Activated CD4-positive, alpha-beta memory T cell treated with anti-CD3 and anti-CD28 coated beads for 36 hours (primary cell): ENCODE measurements at regions of chr21 and their contacts with region 1.

Region 1: GRCh38 chr21:38349111-38349746 is 92.4 kb downstream of the KCNJ15 start:
- DNase-seq: peak; percentile 44
- H3K4me3 Mint-ChIP-seq: peak overlapping the region; percentile 13
- H3K27ac Mint-ChIP-seq: peak overlapping the region; percentile 77
- H3K4me1 Mint-ChIP-seq: peaks cover 42% of the 10 kb centered on the region
- H3K27me3 Mint-ChIP-seq: peaks cover 2% of the 10 kb centered on the region

Region 2: GRCh38 chr21:38244885-38245545 is 104.2 kb before region 1 on chr21:
- CTCF ChIA-PET with region 1: interaction called, 19 read pairs
- POLR2A ChIA-PET with region 1: no interaction called
- intact Hi-C with region 1: loop called (anchors 1 kb)
- DNase-seq: peak; percentile 79
- H3K4me3 Mint-ChIP-seq: no peak overlapping the region
- H3K27ac Mint-ChIP-seq: peak overlapping the region; percentile 64
- H3K4me1 Mint-ChIP-seq: peaks cover 26% of the 10 kb centered on the region
- H3K27me3 Mint-ChIP-seq: peaks cover 14% of the 10 kb centered on the region

Region 3: DNA sequence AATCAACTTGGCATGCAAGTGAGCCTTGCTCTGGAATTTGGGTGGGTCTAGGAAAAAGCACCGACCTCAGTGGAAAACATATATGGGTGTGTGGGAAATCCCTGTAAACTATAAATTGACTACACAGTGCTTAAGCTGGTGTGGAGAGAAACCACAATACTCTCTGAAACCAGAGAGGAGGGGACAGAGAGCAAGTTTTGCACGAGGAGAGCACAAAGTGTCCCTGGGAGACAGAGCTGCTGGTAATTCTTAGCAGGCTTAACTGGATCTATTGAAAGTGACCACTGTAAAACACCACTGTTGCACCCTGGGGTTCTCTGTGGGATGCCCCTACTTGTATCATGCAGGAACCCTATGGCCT is 79.7 kb before region 1 on chr21:
- CTCF ChIA-PET with region 1: interaction called, 12 read pairs
- POLR2A ChIA-PET with region 1: no interaction called
- intact Hi-C with region 1: loop called (anchors 1 kb)
- DNase-seq: no peak
- H3K4me3 Mint-ChIP-seq: no peak overlapping the region
- H3K27ac Mint-ChIP-seq: no peak overlapping the region
- H3K4me1 Mint-ChIP-seq: peaks cover 27% of the 10 kb centered on the region
- H3K27me3 Mint-ChIP-seq: peaks cover 13% of the 10 kb centered on the region

Region 4: GRCh38 chr21:38303300-38303699 is 45.9 kb before region 1 on chr21:
- CTCF ChIA-PET with region 1: interaction called, 3 read pairs
- POLR2A ChIA-PET with region 1: no interaction called
- intact Hi-C with region 1: loop called (anchors 5 kb)
- DNase-seq: no peak
- H3K4me3 Mint-ChIP-seq: no peak overlapping the region
- H3K27ac Mint-ChIP-seq: no peak overlapping the region
- H3K4me1 Mint-ChIP-seq: peaks cover 25% of the 10 kb centered on the region
- H3K27me3 Mint-ChIP-seq: peaks cover 2% of the 10 kb centered on the region

Region 5: DNA sequence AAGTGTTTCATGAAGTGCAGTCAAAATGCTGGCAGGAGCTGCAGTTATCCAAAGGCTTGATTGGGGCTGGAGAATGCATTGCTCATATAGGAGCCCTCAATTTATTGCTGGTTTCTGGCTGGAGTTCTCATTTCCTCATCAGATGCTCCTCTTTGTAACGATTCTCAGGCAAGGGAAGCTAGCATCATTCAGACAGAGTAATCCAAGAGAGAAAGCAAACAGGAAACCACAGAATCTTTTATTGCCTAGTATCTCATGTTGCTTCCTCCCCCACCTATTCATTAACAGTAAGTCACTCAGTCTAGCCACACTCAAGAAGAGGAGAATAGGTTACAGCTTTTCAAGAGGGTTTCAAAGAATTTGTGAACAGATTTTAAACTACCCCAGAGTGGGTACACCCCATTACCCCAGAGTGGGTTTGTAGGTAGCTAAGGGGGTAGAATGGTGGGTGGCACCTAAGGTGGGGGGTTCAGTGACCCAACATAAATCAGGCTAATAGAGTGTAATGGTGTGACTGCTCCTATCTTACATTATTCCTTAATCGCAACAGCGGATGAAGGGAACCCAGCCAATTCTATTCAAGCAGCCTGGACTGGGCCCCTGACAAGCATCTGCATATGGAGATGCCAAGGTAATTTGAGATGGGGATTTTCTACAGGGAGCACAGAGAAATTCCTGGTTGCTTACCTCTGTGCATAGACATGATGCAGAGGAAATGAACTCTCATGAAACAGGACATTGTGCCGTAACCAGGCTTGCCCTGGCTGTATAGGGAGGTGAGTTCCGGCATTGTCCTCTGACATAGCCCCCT is 25.3 kb before region 1 on chr21:
- CTCF ChIA-PET with region 1: interaction called, 4 read pairs
- POLR2A ChIA-PET with region 1: interaction called, 3 read pairs
- intact Hi-C with region 1: loop called (anchors 1 kb)
- DNase-seq: no peak
- H3K4me3 Mint-ChIP-seq: no peak overlapping the region
- H3K27ac Mint-ChIP-seq: peak overlapping the region; percentile 10
- H3K4me1 Mint-ChIP-seq: peaks cover 26% of the 10 kb centered on the region
- H3K27me3 Mint-ChIP-seq: no peaks in the 10 kb centered on the region